ENCODE measurements at regions of chr4 and their contacts with region 1.

Region 1: DNA sequence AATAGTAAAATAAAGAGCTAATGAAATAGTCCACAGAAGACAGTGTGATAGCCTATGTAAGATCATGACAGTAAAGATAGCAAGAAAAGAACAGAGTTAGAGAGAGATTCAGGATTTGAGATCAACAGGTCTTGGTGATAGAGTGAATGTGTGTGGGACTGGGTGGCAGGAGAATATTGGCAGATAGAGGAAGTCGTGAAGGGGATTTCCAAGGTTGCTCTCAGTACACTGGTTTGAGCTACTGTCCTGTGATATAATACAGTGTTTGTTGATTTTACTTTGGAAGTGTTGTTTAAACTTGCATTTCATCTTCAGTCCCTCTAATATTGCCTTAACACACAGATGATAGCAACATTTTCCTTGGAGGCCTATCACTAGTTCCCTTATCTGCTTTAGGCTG is 44.1 kb downstream of the DTHD1 start:
- DNase-seq: no peak
- H3K4me3 Mint-ChIP-seq: peak overlapping the region; percentile 23
- H3K27ac Mint-ChIP-seq: peak overlapping the region; percentile 73
- H3K4me1 Mint-ChIP-seq: peaks cover 71% of the 10 kb centered on the region
- H3K27me3 Mint-ChIP-seq: no peaks in the 10 kb centered on the region

Region 2: GRCh38 chr4:36081185-36081584 is 244.3 kb before region 1 on chr4:
- intact Hi-C with region 1: loop called (anchors 2 kb)
- DNase-seq: no peak
- H3K4me3 Mint-ChIP-seq: no peak overlapping the region
- H3K27ac Mint-ChIP-seq: no peak overlapping the region
- H3K4me1 Mint-ChIP-seq: peaks cover 3% of the 10 kb centered on the region
- H3K27me3 Mint-ChIP-seq: no peaks in the 10 kb centered on the region

Region 3: GRCh38 chr4:36208893-36209473 is 116.5 kb before region 1 on chr4:
- intact Hi-C with region 1: loop called (anchors 1 kb)
- DNase-seq: peak; percentile 10
- H3K4me3 Mint-ChIP-seq: peak overlapping the region; percentile 56
- H3K27ac Mint-ChIP-seq: peak overlapping the region; percentile 70
- H3K4me1 Mint-ChIP-seq: peaks cover 64% of the 10 kb centered on the region
- H3K27me3 Mint-ChIP-seq: no peaks in the 10 kb centered on the region

Region 4: GRCh38 chr4:36269101-36269500 is 56.4 kb before region 1 on chr4:
- intact Hi-C with region 1: loop called (anchors 1 kb)
- DNase-seq: peak; percentile 59
- H3K4me3 Mint-ChIP-seq: no peak overlapping the region
- H3K27ac Mint-ChIP-seq: peak overlapping the region; percentile 75
- H3K4me1 Mint-ChIP-seq: peaks cover 56% of the 10 kb centered on the region
- H3K27me3 Mint-ChIP-seq: no peaks in the 10 kb centered on the region

Region 5: GRCh38 chr4:36394352-36394903 is 68.9 kb after region 1 on chr4:
- intact Hi-C with region 1: loop called (anchors 1 kb)
- DNase-seq: peak; percentile 56
- H3K4me3 Mint-ChIP-seq: peak overlapping the region; percentile 71
- H3K27ac Mint-ChIP-seq: peak overlapping the region; percentile 97
- H3K4me1 Mint-ChIP-seq: peaks cover 34% of the 10 kb centered on the region
- H3K27me3 Mint-ChIP-seq: peaks cover 5% of the 10 kb centered on the region